Mammary epithelial cell (primary cell): ENCODE measurements at regions of chr10 and their contacts with region 1.

Region 1: GRCh38 chr10:32346134-32346550 is 816 bp downstream of the EPC1 start:
- DNase-seq: peak; percentile 94
- H3K4me3 ChIP-seq: peak overlapping the region; percentile 96 to 99 (median 97)
- H3K27ac ChIP-seq: peak overlapping the region; percentile 99
- H3K4me1 ChIP-seq: peaks cover 17% of the 10 kb centered on the region
- H3K27me3 ChIP-seq: no peaks in the 10 kb centered on the region
- CTCF ChIP-seq: peak; percentile 78 to 99

Region 2: DNA sequence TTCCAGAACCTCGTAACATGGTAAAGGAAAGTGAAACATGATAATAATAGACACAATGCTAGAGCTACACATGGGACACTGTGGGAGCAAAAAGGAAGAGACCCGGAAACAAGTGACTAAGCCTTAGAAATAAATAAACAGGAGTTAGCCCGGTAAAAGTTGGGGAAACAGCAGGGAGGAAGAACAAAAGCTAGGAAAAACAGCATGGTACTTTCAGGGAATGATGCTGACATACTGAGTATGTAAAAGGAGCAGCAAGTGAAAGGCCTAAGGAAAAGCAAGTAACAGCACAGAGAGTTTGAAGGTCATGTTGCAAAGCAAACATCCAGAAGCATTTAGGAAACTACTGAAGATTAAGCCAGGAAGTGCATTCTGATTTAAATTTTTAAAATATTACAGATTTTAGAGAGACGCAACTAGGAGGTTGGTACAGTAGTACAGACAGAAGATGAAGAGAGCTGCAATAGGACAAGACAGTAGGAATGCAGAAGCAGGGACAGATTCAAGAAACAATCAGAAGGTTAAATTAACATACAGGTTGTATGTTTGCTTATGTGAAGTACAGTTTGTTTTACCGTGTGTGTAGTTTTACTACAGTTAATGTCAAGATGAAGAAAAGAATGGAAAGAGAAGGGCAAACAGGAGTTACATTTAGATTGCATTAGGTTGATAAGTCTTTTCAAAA is 481.2 kb before region 1 on chr10:
- CTCF ChIA-PET with region 1: no interaction called
- dilution Hi-C with region 1: no loop called
- in situ Hi-C with region 1: no loop called
- intact Hi-C with region 1: loop called (anchors 10 kb)
- DNase-seq: no peak
- H3K4me3 ChIP-seq: no peak overlapping the region
- H3K27ac ChIP-seq: no peak overlapping the region
- H3K4me1 ChIP-seq: peaks cover 6% of the 10 kb centered on the region
- H3K27me3 ChIP-seq: no peaks in the 10 kb centered on the region
- CTCF ChIP-seq: no peak

Region 3: DNA sequence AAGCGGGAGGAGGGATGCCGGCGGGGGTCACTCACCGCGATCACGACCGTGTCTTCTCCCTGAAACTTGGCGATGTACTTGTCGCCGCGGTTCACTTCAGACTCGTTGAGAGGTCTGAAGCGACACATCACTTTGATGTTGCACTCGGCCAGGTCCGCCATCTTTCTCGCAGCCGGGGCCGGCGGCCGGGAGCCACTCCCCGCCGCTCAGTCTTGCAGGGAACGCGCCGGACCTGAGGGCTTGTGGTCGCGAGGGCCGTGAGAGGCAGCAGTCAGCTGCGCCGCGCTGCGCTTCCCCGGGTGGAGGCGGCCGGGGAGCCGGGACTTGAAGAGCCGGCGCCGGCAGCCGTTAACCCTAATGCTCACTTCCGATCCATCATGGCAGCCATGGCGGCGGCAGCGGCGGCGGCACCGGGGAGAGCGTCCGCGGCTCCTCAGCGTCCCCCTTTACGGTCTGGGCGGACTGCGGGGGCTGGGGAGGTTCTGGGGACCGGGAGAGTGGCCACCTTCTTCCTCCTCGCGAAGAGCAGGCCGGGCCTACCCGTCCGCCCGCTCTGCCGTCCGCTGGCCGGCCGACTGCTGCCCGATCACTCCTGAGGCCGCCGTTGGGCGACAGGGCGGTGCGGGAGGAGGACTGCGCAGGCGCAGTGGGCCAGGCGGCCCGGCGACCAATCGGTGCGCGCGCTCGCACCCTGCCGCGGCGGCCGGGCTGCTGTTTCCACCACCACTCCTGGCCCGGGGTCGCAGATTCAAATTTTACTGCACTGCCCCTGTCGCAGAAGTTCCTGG is 290.1 kb before region 1 on chr10 and contains the start of gene KIF5B:
- CTCF ChIA-PET with region 1: no interaction called
- dilution Hi-C with region 1: no loop called
- in situ Hi-C with region 1: loop called in 1 of 2 experiments (anchors 25 kb)
- intact Hi-C with region 1: loop called (anchors 5 kb)
- DNase-seq: peak; percentile 79
- H3K4me3 ChIP-seq: peak within 1 kb of the TSS; percentile 82 to 95 (median 91)
- H3K27ac ChIP-seq: peak within 1 kb of the TSS; percentile 56
- H3K4me1 ChIP-seq: peaks cover 3% of the 10 kb centered on the region
- H3K27me3 ChIP-seq: no peaks in the 10 kb centered on the region
- CTCF ChIP-seq: no peak
- total RNA-seq, gene KIF5B: 146 to 168 TPM

Region 4: GRCh38 chr10:32190890-32191491 is 155.2 kb before region 1 on chr10:
- CTCF ChIA-PET with region 1: no interaction called
- dilution Hi-C with region 1: no loop called
- in situ Hi-C with region 1: no loop called
- intact Hi-C with region 1: loop called (anchors 1 kb)
- DNase-seq: peak; percentile 27
- H3K4me3 ChIP-seq: no peak overlapping the region
- H3K27ac ChIP-seq: no peak overlapping the region
- H3K4me1 ChIP-seq: no peaks in the 10 kb centered on the region
- H3K27me3 ChIP-seq: no peaks in the 10 kb centered on the region
- CTCF ChIP-seq: peak; percentile 65 to 66

Region 5: GRCh38 chr10:32256613-32257437 is 89.3 kb before region 1 on chr10:
- CTCF ChIA-PET with region 1: interaction called, 6 read pairs
- dilution Hi-C with region 1: no loop called
- in situ Hi-C with region 1: loop called in 1 of 2 experiments (anchors 10 kb)
- intact Hi-C with region 1: loop called (anchors 1 kb)
- DNase-seq: peak; percentile 46
- H3K4me3 ChIP-seq: no peak overlapping the region
- H3K27ac ChIP-seq: no peak overlapping the region
- H3K4me1 ChIP-seq: peaks cover 13% of the 10 kb centered on the region
- H3K27me3 ChIP-seq: no peaks in the 10 kb centered on the region
- CTCF ChIP-seq: peak; percentile 94 to 98

Region 6: DNA sequence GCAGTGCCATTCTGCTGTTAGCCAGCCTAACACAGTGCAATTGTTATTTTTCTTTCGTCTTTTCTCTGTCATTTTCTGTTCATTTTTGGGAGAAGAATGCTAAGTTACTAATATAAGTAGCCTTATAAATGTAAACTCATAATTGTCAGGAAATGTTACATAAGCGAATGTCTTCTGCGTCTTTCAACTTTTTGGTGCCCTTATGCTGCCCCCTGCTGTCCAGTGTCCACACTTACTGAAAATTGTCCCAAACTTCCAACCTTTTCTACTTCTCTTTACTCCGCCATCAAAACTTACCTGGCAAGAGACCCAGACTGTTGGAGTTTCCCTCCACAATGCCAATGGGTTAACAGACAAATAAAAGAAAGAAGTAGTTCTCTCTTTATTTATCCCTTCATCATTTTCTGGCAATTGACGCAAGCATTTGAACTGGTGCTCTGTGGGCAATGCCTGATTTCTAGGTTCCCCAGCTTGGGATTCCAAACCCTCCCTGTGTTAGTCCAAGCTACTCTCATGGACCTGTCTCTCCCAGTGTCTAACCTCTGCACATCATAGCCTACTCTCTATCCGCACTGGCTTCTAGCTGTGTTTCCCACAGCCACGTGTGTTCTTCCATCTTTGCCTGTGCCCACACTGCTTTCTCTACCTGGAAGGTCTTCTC is 21.8 kb after region 1 on chr10:
- CTCF ChIA-PET with region 1: no interaction called
- dilution Hi-C with region 1: no loop called
- in situ Hi-C with region 1: no loop called
- intact Hi-C with region 1: loop called (anchors 2 kb)
- DNase-seq: peak; percentile 51
- H3K4me3 ChIP-seq: no peak overlapping the region
- H3K27ac ChIP-seq: peak overlapping the region; percentile 8
- H3K4me1 ChIP-seq: no peaks in the 10 kb centered on the region
- H3K27me3 ChIP-seq: no peaks in the 10 kb centered on the region
- CTCF ChIP-seq: peak; percentile 73 to 76

Region 7: DNA sequence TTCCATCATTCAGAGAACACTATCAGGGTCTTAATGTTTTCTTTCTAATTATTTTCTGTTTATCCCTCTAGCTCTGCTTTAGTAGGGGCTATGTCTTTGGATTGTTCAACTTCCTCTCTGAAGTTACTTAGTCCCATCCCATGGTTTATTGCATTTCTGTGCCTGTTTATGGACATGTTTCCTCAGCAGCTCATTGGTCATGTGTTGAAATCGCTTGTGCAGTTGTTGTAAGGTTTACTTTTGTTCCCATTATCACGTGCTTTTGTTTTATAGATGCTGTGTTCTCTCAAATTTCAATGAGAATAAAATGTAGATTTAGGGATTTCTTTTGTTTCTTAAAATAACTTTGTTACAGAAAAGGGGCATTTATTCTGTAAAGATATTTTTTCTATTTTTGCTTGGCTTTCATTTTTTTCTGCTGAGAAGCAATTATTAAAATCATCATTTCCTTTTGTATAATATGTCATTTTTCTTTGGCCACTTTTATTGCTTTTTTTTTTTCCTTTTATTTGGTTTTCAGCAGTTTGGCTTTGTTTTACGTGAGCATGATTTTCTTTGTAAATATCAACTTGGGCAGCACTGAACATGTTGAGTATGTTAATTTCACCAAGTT is 210.7 kb after region 1 on chr10:
- CTCF ChIA-PET with region 1: no interaction called
- dilution Hi-C with region 1: no loop called
- in situ Hi-C with region 1: no loop called
- intact Hi-C with region 1: no loop called
- DNase-seq: no peak
- H3K4me3 ChIP-seq: no peak overlapping the region
- H3K27ac ChIP-seq: no peak overlapping the region
- H3K4me1 ChIP-seq: no peaks in the 10 kb centered on the region
- H3K27me3 ChIP-seq: no peaks in the 10 kb centered on the region
- CTCF ChIP-seq: no peak

Region 8: DNA sequence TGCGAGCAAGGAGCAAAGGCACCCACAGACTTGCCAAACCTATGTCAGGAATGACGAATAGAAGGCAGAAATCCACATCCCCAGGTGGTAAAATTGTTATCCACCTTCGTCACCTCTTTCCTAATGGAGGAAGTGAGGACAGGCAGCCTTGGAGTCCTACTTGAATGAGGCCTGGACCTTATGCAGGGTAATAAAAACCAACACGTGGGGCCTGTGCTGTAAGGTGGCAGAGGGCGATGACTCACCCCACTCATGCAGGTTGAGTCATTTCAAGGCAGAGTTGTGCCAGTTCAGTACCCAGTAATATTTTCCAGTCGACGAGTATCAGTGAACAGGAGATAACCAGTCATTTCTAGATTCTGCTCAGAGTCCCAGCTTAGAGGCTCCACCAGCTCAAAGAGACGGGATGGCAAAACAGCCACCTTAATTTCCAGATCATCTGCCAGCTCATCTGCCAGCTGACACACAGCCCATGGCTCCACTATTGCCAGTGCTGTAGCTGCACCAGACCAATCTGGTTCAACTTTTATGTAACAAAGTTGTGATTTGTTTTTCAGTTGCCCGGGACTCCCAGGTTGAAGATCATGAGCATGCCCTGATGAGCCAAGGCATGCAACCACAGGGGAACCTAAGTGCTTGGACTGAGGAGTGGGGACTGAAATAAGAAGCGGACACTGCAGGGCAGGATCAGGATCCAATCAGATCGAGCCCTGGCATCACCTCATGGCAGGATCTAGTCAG is 788.0 kb after region 1 on chr10:
- CTCF ChIA-PET with region 1: no interaction called
- dilution Hi-C with region 1: no loop called
- in situ Hi-C with region 1: no loop called
- intact Hi-C with region 1: no loop called
- DNase-seq: peak; percentile 100
- H3K4me3 ChIP-seq: no peak overlapping the region
- H3K27ac ChIP-seq: peak overlapping the region; percentile 96
- H3K4me1 ChIP-seq: peaks cover 77% of the 10 kb centered on the region
- H3K27me3 ChIP-seq: no peaks in the 10 kb centered on the region
- CTCF ChIP-seq: no peak